Activated B cell treated with CpG ODN at 0.5 μM for 24 hours (primary cell): ENCODE measurements at regions of chr19 and their contacts with region 1.

Region 1: GRCh38 chr19:48480558-48481500 is 11.7 kb downstream of the CYTH2 start:
- DNase-seq: no peak
- ATAC-seq: peak; percentile 73
- H3K4me3 Mint-ChIP-seq: peak overlapping the region; percentile 84
- H3K27ac Mint-ChIP-seq: no peak overlapping the region
- H3K4me1 Mint-ChIP-seq: peaks cover 11% of the 10 kb centered on the region
- H3K27me3 Mint-ChIP-seq: peaks cover 1% of the 10 kb centered on the region
- CTCF ChIP-seq: no peak

Region 2: GRCh38 chr19:48468775-48469288 is 12.0 kb before region 1 on chr19:
- CTCF ChIA-PET with region 1: no interaction called
- POLR2A ChIA-PET with region 1: interaction called, 4 read pairs
- intact Hi-C with region 1: loop called (anchors 1 kb)
- DNase-seq: peak; percentile 95
- ATAC-seq: peak; percentile 88
- H3K4me3 Mint-ChIP-seq: peak overlapping the region; percentile 90
- H3K27ac Mint-ChIP-seq: peak overlapping the region; percentile 94
- H3K4me1 Mint-ChIP-seq: peaks cover 27% of the 10 kb centered on the region
- H3K27me3 Mint-ChIP-seq: no peaks in the 10 kb centered on the region
- CTCF ChIP-seq: no peak